ENCODE measurements at regions of chr4 and their contacts with region 1.

Region 1: GRCh38 chr4:38667085-38667893 is 3.3 kb downstream of the KLF3 start:
- DNase-seq: peak; percentile 76
- H3K4me3 Mint-ChIP-seq: peak overlapping the region; percentile 93
- H3K27ac Mint-ChIP-seq: peak overlapping the region; percentile 91
- H3K4me1 Mint-ChIP-seq: peaks cover 70% of the 10 kb centered on the region
- H3K27me3 Mint-ChIP-seq: no peaks in the 10 kb centered on the region

Region 2: DNA sequence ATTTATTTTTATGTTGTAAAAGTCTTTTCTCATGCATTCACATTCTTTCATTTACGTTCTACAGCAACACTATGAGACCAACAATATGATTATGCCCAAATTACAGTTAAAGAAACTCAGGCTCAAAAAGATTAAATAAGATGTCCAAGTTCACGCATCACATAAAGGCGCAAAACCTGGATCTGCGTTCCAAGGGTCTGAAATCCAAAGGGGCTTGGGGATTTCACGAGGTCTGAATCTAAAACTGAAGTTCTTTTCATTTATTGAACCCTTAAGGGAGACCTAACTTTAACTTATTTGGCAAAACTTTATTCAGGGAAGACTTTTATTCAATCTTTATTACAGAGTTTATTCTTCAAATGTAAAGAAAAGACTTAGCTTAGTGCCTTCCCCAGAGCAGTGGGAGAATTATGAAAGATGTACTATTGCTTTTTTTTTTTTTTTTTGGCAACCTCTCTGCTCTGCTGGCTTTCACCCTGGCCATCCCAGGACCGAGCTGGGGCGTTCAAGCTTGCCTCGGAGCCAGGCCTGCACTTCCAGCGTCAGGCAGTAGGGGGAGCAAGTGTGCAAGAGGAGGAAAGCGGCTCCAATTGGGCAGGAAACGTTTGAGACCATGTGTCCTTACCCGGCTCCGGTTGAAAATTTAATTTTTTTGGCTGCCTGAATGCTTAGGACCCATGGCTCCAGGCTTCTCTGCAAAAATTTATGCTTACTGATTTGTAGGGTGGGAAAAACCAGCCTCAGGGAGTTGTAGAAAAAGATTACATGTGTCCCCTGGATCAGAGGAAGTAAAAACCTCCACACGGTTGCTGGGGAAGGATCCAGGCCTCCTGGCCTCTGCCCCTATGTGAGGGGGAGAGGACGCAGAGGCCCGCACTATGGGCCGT is 347.6 kb before region 1 on chr4:
- CTCF ChIA-PET with region 1: interaction called, 16 read pairs
- DNase-seq: peak; percentile 95
- H3K4me3 Mint-ChIP-seq: peak overlapping the region; percentile 74
- H3K27ac Mint-ChIP-seq: peak overlapping the region; percentile 97
- H3K4me1 Mint-ChIP-seq: peaks cover 74% of the 10 kb centered on the region
- H3K27me3 Mint-ChIP-seq: peaks cover 4% of the 10 kb centered on the region